ENCODE measurements at regions of chr18 and their contacts with region 1.

Region 1: GRCh38 chr18:11470941-11471340 is 138.5 kb upstream of the SLC35G4 start:
- DNase-seq: no peak
- ATAC-seq: no peak
- H3K4me3 ChIP-seq: no peak overlapping the region
- H3K4me3 Mint-ChIP-seq: no peak overlapping the region
- H3K27ac ChIP-seq: no peak overlapping the region
- H3K27ac Mint-ChIP-seq: no peak overlapping the region
- H3K4me1 ChIP-seq: no peaks in the 10 kb centered on the region
- H3K4me1 Mint-ChIP-seq: no peaks in the 10 kb centered on the region
- H3K27me3 ChIP-seq: no peaks in the 10 kb centered on the region
- H3K27me3 Mint-ChIP-seq: no peaks in the 10 kb centered on the region

Region 2: GRCh38 chr18:10424585-10425307 is 1046.2 kb before region 1 on chr18:
- CTCF ChIA-PET with region 1: no interaction called
- POLR2A ChIA-PET with region 1: interaction called in 1 of 2 experiments, 10 read pairs
- DNase-seq: no peak
- ATAC-seq: no peak
- H3K4me3 ChIP-seq: no peak overlapping the region
- H3K4me3 Mint-ChIP-seq: no peak overlapping the region
- H3K27ac ChIP-seq: no peak overlapping the region
- H3K27ac Mint-ChIP-seq: no peak overlapping the region
- H3K4me1 ChIP-seq: no peaks in the 10 kb centered on the region
- H3K4me1 Mint-ChIP-seq: no peaks in the 10 kb centered on the region
- H3K27me3 ChIP-seq: peaks cover 0 to 9% of the 10 kb centered on the region in 2 experiments
- H3K27me3 Mint-ChIP-seq: peaks cover 7 to 10% of the 10 kb centered on the region in 2 donors

Measured in T-cell (primary cell).